K562 (cell line): ENCODE measurements at regions of chr2 and their contacts with region 1.

Region 1: GRCh38 chr2:230824406-230824978 is 40.2 kb upstream of the ITM2C start:
- DNase-seq: peak; percentile 58 to 81 (median 61)
- ATAC-seq: peak; percentile 86
- H3K4me3 ChIP-seq: no peak overlapping the region
- H3K27ac ChIP-seq: no peak overlapping the region
- H3K4me1 ChIP-seq: peaks cover 0 to 16% of the 10 kb centered on the region in 2 experiments; a peak in 2 of 5 replicates
- H3K27me3 ChIP-seq: peaks cover 0 to 11% of the 10 kb centered on the region in 2 experiments; a peak in 2 of 5 replicates
- CTCF ChIP-seq: peak; percentile 65 to 71 (median 65)
- EP300 ChIP-seq: no peak
- POLR2A ChIP-seq: no peak
- RAD21 ChIP-seq: peak; percentile 58 to 71

Region 2: GRCh38 chr2:230864598-230865306 is 40.3 kb after region 1 on chr2 and contains the start of gene ITM2C:
- CTCF ChIA-PET with region 1: no interaction called
- POLR2A ChIA-PET with region 1: interaction called, 3 read pairs
- in situ Hi-C with region 1: no loop called
- intact Hi-C with region 1: loop called (anchors 5 kb)
- DNase-seq: peak; percentile 80 to 93 (median 90)
- ATAC-seq: peak; percentile 96
- H3K4me3 ChIP-seq: peak within 1 kb of the TSS; percentile 66
- H3K27ac ChIP-seq: peak within 1 kb of the TSS; percentile 46; the same call in 1 of the 3 replicates
- H3K4me1 ChIP-seq: peaks cover 0 to 39% of the 10 kb centered on the region in 2 experiments; a peak in 3 of 5 replicates
- H3K27me3 ChIP-seq: peaks cover 2 to 26% of the 10 kb centered on the region in 2 experiments; a peak in 3 of 5 replicates
- CTCF ChIP-seq: peak; percentile 45 to 60 (median 52); a peak in 5 of 6 replicates
- EP300 ChIP-seq: no peak
- POLR2A ChIP-seq: peak; percentile 61
- RAD21 ChIP-seq: 0 out of 4 replicates have a peak, but pooled peaks of 1 of the 2 experiments have one; percentile 13
- polyA plus RNA-seq, gene ITM2C: 0.49 to 1.4 TPM

Region 3: GRCh38 chr2:230913406-230914143 is 89.1 kb after region 1 on chr2:
- CTCF ChIA-PET with region 1: no interaction called
- POLR2A ChIA-PET with region 1: no interaction called
- in situ Hi-C with region 1: no loop called
- intact Hi-C with region 1: loop called (anchors 1 kb)
- DNase-seq: peak; percentile 53 to 62 (median 58)
- ATAC-seq: peak; percentile 67; the same call in 2 of the 3 replicates
- H3K4me3 ChIP-seq: no peak overlapping the region
- H3K27ac ChIP-seq: no peak overlapping the region
- H3K4me1 ChIP-seq: peaks cover 6 to 24% of the 10 kb centered on the region in 2 experiments; a peak in 4 of 5 replicates
- H3K27me3 ChIP-seq: no peaks in the 10 kb centered on the region
- CTCF ChIP-seq: peak; percentile 64 to 71 (median 67); a peak in 5 of 6 replicates
- EP300 ChIP-seq: no peak
- POLR2A ChIP-seq: no peak
- RAD21 ChIP-seq: peak; percentile 59 to 74